Ascending aorta (tissue), 2 donors: ENCODE measurements at regions of chr15 and their contacts with region 1.

Region 1: GRCh38 chr15:101127506-101128076 is 124.3 kb downstream of the CHSY1 start:
- DNase-seq: peak; percentile 63 to 95
- H3K4me3 ChIP-seq: peak overlapping the region in 1 of 2 donors; percentile 32
- H3K27ac ChIP-seq: peak overlapping the region; percentile 93 to 94
- H3K4me1 ChIP-seq: peaks cover 14 to 27% of the 10 kb centered on the region in 2 donors
- H3K27me3 ChIP-seq: no peaks in the 10 kb centered on the region
- CTCF ChIP-seq: no peak

Region 2: DNA sequence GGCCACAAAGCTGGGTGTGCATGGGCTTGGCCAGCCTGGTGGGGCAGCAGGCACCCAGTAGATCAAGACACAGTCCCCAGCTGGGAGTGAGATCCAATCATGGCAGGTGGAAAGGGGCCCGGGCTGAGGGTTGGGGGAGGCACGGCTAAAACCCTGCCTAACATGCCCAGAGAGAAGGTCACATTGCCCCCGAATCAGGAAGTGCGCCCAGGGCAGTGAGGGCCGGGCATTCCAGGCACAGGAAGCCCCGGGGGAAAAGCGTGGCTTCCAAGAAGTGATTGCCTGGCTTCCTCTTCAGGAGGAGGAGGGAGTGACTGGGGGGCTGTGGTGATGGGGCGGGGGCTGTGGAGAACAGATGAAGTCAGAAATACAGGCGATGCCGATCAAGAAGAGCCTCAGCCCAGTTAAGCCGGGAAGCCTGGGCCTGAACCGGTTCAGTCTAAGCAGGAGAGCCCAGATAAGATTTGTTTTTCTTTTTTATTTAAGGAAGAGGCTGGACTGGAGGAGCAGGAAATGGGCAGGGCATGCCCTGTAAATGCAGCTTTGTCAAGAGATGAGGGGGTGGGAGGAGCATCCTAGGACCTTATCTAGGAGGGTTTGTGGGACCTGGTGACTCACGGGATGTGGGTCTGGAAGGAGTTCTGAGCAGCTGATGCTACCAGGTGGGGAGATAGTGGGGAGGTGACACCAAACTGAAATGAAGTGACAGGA is 40.3 kb after region 1 on chr15:
- intact Hi-C with region 1: loop called (anchors 1 kb)
- DNase-seq: peak; percentile 69 to 92
- H3K4me3 ChIP-seq: peak overlapping the region; percentile 13 to 37
- H3K27ac ChIP-seq: peak overlapping the region; percentile 94
- H3K4me1 ChIP-seq: peaks cover 23 to 36% of the 10 kb centered on the region in 2 donors
- H3K27me3 ChIP-seq: no peaks in the 10 kb centered on the region
- CTCF ChIP-seq: peak in 1 of 3 experiments; percentile 29

Region 3: DNA sequence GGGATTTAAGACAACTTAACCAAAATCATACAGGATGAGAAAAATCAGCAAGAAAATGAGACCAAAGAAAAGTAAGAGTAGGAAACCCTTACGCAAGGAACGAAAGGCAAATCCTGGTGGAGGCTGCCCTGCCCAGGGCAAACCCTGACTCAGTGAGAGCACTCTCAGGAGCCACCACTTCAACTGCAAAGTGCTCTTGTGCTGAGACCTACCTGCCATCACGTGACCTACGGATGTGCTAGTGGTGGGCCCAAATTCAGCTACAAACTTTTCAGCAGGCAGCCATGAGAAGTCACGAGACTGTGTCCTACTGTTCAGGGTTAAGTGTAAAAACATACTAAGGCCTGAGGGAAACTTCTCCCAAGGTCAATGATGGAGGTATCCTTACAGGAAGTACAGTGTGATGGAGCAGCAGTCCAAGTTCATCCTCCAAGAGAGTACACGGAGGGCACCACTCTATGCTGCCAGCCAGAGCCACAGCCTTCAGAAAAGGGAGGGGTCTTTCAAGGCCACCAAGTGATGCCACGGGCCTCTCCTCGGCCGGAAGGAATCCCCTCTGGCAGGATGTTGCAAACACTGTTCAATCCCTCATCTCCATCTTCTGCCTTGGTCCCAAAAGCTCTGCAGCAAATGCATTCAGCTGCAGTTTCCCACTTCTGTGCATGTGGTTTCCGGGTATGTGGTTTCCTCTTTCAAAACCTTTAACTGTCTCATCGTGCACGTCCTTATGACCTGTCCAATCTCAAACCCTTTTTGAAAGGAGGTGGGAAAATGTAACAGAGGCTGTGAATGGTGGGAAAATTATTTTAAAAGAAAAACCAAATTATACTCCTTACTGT is 114.8 kb after region 1 on chr15:
- intact Hi-C with region 1: no loop called
- DNase-seq: peak in 1 of 2 donors; percentile 64
- H3K4me3 ChIP-seq: peak overlapping the region in 1 of 2 donors; percentile 4
- H3K27ac ChIP-seq: peak overlapping the region in 1 of 2 donors; percentile 19
- H3K4me1 ChIP-seq: peaks cover 19 to 52% of the 10 kb centered on the region in 2 donors
- H3K27me3 ChIP-seq: no peaks in the 10 kb centered on the region
- CTCF ChIP-seq: no peak